CD4-positive, alpha-beta memory T cell (primary cell): ENCODE measurements at regions of chr5 and their contacts with region 1.

Region 1: DNA sequence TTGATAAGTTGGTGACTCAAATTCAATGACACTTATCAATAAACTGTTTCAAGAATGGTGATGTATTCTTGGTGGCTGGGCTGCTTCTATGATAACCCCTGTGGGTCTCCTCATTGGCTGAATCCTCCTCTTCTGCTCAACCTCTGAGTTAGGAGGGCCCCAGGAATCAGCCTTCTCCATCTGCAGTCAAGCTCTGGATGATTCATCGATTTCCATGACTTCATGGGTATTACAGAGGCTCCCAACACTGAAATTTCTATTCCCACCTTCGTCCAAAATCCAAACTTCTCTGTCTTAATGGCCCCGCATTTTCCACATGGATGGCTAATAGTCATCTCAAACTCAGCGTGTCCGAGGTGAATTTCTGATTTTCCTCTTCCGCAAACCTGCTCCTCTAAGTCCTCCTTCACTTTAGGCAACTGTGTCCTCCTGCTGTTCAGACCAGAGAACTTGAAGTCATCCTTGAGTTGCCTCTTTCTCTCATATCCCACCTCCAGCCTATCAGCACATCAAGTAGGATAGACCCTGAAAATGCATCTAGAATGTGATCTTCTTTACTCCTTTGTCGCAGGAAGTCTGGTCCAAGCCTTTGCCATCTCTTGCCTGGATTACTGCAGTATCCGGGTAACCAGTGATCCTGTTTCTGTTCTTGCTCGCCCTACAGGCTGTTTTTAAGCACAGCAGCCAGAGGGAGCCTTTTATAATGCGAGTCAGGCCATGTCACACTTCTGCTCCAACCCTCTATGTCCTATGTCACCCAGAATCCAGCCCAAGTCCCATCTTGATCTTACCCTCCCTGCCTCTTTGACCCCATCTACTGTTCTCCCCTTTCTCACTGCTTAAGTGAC is 41.4 kb upstream of the IL7R start:
- DNase-seq: peak in 3 of 5 donors; percentile 51 to 55 (median 53)
- H3K4me3 ChIP-seq: peak overlapping the region in 1 of 2 donors; percentile 26
- H3K4me3 Mint-ChIP-seq: no peak overlapping the region
- H3K27ac ChIP-seq: peak overlapping the region; percentile 47
- H3K27ac Mint-ChIP-seq: no peak overlapping the region
- H3K4me1 ChIP-seq: peaks cover 97% of the 10 kb centered on the region
- H3K4me1 Mint-ChIP-seq: peaks cover 32 to 43% (median 36%) of the 10 kb centered on the region in 4 donors
- H3K27me3 ChIP-seq: no peaks in the 10 kb centered on the region
- H3K27me3 Mint-ChIP-seq: no peaks in the 10 kb centered on the region

Region 2: DNA sequence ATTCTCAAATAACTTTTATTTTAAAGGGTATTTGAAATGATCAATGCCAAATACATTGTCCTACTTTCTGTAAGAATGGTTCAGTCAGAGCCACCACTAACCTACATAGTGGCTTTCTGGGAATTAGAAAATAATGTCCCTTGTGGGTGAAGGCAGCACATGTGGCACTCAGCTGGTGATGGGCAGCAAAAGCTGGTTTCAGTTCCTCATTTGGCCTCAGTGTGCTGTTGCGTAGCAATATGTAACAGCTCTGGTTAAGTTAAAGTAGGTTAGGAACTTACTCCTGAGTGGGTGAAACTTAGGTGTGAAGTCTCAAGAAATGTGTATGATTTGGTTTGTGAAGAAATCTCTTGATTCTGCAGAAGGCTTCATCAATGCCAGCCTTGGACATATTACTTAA is 297.2 kb before region 1 on chr5:
- CTCF ChIA-PET with region 1: no interaction called
- POLR2A ChIA-PET with region 1: no interaction called
- intact Hi-C with region 1: no loop called
- DNase-seq: no peak
- H3K4me3 ChIP-seq: no peak overlapping the region
- H3K4me3 Mint-ChIP-seq: no peak overlapping the region
- H3K27ac ChIP-seq: no peak overlapping the region
- H3K27ac Mint-ChIP-seq: no peak overlapping the region
- H3K4me1 ChIP-seq: no peaks in the 10 kb centered on the region
- H3K4me1 Mint-ChIP-seq: no peaks in the 10 kb centered on the region
- H3K27me3 ChIP-seq: no peaks in the 10 kb centered on the region
- H3K27me3 Mint-ChIP-seq: peaks cover 3 to 14% of the 10 kb centered on the region in 2 donors

Region 3: DNA sequence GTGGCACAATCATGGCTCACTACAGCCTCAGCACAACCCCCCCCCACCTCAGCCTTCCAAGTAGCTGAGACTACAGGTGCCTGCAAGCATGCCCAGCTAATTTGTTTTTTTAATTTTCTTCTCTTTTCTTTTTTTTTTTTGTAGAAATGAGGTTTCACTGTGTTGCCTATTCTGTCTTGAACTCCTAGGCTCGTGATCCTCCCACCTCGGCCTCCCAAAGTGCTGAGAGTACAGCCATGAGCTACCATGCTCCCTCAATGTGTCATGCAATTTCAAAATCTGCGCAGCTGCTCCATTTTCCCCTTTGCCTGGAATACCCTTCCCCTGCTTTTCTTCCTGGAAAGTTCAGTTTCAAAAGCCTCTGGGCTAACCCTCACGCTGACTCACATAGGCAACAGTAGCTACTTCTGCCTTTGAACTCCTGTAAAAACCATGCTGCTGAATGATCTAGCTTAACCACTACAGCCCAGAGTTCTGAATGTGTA is 29.7 kb before region 1 on chr5:
- CTCF ChIA-PET with region 1: interaction called, 56 read pairs
- POLR2A ChIA-PET with region 1: interaction called, 233 read pairs
- intact Hi-C with region 1: loop called (anchors 1 kb)
- DNase-seq: peak in 1 of 5 donors; percentile 44
- H3K4me3 ChIP-seq: no peak overlapping the region
- H3K4me3 Mint-ChIP-seq: peak overlapping the region in 7 of 8 donors; percentile 6 to 78 (median 65)
- H3K27ac ChIP-seq: no peak overlapping the region
- H3K27ac Mint-ChIP-seq: peak overlapping the region; percentile 45 to 94 (median 67)
- H3K4me1 ChIP-seq: peaks cover 83% of the 10 kb centered on the region
- H3K4me1 Mint-ChIP-seq: peaks cover 53 to 91% (median 76%) of the 10 kb centered on the region in 4 donors
- H3K27me3 ChIP-seq: no peaks in the 10 kb centered on the region
- H3K27me3 Mint-ChIP-seq: no peaks in the 10 kb centered on the region

Region 4: DNA sequence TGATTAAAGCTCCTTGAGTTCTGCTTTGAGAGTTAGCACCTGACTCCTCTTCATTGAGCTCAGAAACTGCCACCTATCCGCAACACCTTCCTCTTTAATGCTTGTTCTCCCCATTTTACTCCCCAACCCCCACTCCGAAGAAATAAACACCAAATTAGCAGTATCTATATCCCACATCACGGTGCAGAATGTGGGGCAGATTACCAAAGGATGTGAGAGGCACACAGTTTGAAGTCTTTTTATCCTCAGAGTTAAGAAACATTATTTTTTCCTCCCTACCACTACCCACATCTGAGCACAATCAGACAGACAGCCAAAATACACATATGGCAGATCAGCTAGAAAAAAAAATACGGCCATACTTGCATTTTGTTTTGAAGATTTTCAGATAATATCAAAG is 15.3 kb after region 1 on chr5:
- CTCF ChIA-PET with region 1: interaction called, 29 read pairs
- POLR2A ChIA-PET with region 1: interaction called, 262 read pairs
- intact Hi-C with region 1: loop called (anchors 1 kb)
- DNase-seq: peak; percentile 80 to 90 (median 85)
- H3K4me3 ChIP-seq: peak overlapping the region in 1 of 2 donors; percentile 41
- H3K4me3 Mint-ChIP-seq: peak overlapping the region; percentile 21 to 72 (median 56)
- H3K27ac ChIP-seq: peak overlapping the region; percentile 45
- H3K27ac Mint-ChIP-seq: peak overlapping the region; percentile 57 to 99 (median 84)
- H3K4me1 ChIP-seq: peaks cover 97% of the 10 kb centered on the region
- H3K4me1 Mint-ChIP-seq: peaks cover 67 to 96% (median 88%) of the 10 kb centered on the region in 4 donors
- H3K27me3 ChIP-seq: no peaks in the 10 kb centered on the region
- H3K27me3 Mint-ChIP-seq: no peaks in the 10 kb centered on the region

Region 5: DNA sequence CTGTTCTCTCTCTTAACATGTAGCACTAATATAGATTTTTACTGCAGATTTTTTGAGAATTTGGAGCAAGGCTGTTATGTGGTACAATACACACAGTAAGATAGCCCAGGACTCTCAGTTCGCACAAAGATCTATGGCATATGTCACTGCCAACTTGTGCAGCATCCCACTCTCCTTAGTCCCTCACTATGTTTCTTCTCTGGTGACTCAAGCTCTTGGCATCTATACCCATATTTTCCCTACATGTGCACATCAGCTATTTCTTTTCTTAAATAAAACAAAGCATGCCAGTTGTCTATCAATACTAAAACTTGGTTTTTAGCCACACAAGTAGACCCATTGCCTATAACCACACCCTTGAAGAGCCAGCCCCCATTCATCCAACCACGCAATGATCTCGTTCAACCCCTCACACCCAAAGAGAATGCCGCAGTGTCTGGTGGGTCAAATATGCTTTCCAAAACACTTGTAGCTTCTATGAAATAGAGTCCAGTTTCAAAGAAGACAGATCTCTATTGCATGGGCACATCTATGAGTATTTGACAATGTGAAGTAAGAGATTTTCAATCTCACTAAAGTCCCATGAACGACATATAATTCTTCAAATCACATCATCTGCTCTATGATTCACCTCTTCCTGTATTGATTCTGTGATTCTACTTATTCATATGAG is 23.2 kb after region 1 on chr5:
- CTCF ChIA-PET with region 1: interaction called, 4 read pairs
- POLR2A ChIA-PET with region 1: interaction called, 79 read pairs
- intact Hi-C with region 1: no loop called
- DNase-seq: no peak
- H3K4me3 ChIP-seq: peak overlapping the region in 1 of 2 donors; percentile 3
- H3K4me3 Mint-ChIP-seq: peak overlapping the region in 7 of 8 donors; percentile 36 to 86 (median 67)
- H3K27ac ChIP-seq: no peak overlapping the region
- H3K27ac Mint-ChIP-seq: peak overlapping the region; percentile 68 to 94 (median 93)
- H3K4me1 ChIP-seq: peaks cover 73% of the 10 kb centered on the region
- H3K4me1 Mint-ChIP-seq: peaks cover 55 to 80% (median 69%) of the 10 kb centered on the region in 4 donors
- H3K27me3 ChIP-seq: no peaks in the 10 kb centered on the region
- H3K27me3 Mint-ChIP-seq: no peaks in the 10 kb centered on the region